GM12878 (cell line): ENCODE measurements at regions of chr4 and their contacts with region 1.

Region 1: GRCh38 chr4:79249881-79250503 is 75.9 kb downstream of the NAA11 start:
- DNase-seq: no peak
- ATAC-seq: peak; percentile 84
- H3K4me3 ChIP-seq: no peak overlapping the region
- H3K27ac ChIP-seq: no peak overlapping the region
- H3K4me1 ChIP-seq: no peaks in the 10 kb centered on the region
- H3K27me3 ChIP-seq: no peaks in the 10 kb centered on the region; a peak in 2 of 4 replicates
- CTCF ChIP-seq: no peak
- EP300 ChIP-seq: no peak
- POLR2A ChIP-seq: no peak
- RAD21 ChIP-seq: no peak

Region 2: GRCh38 chr4:79049840-79050540 is 200.0 kb before region 1 on chr4:
- CTCF ChIA-PET with region 1: interaction called, 6 read pairs
- POLR2A ChIA-PET with region 1: no interaction called
- RAD21 ChIA-PET with region 1: interaction called, 47 read pairs
- SMC1A ChIA-PET with region 1: interaction called, 13 read pairs
- in situ Hi-C with region 1: no loop called
- intact Hi-C with region 1: no loop called
- DNase-seq: no peak
- ATAC-seq: no peak
- H3K4me3 ChIP-seq: no peak overlapping the region
- H3K27ac ChIP-seq: no peak overlapping the region
- H3K4me1 ChIP-seq: no peaks in the 10 kb centered on the region
- H3K27me3 ChIP-seq: no peaks in the 10 kb centered on the region; a peak in 1 of 4 replicates
- CTCF ChIP-seq: no peak
- EP300 ChIP-seq: no peak
- POLR2A ChIP-seq: no peak
- RAD21 ChIP-seq: no peak

Region 3: GRCh38 chr4:79232540-79232939 is 17.5 kb before region 1 on chr4:
- CTCF ChIA-PET with region 1: interaction called, 7 read pairs
- POLR2A ChIA-PET with region 1: interaction called, 4 read pairs
- RAD21 ChIA-PET with region 1: interaction called, 28 read pairs
- SMC1A ChIA-PET with region 1: interaction called, 32 read pairs
- in situ Hi-C with region 1: no loop called
- intact Hi-C with region 1: no loop called
- DNase-seq: no peak
- ATAC-seq: no peak
- H3K4me3 ChIP-seq: no peak overlapping the region
- H3K27ac ChIP-seq: no peak overlapping the region
- H3K4me1 ChIP-seq: no peaks in the 10 kb centered on the region; the same call in 1 of the 2 replicates
- H3K27me3 ChIP-seq: no peaks in the 10 kb centered on the region
- CTCF ChIP-seq: no peak
- EP300 ChIP-seq: no peak
- POLR2A ChIP-seq: no peak
- RAD21 ChIP-seq: no peak